IMR-90 (cell line): ENCODE measurements at regions of chr10 and their contacts with region 1.

Region 1: DNA sequence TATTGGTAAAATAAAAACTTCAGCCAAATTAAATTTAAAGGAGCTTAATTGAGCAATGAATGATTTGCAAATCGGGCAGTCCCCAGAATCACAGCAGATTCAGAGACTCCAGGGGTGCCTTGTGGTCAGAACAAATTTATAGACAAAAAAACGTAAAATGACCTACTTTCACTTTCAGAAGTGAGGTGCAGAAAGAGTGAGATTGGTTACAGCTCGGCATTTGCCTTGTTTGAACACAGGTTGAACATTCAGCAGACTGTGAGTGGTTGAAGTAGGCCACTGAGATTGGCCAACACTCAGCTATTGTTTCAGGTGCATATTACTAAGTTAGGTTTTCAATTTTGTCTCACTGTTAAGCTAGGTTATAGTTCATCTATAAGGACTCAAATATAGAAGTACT is 153.4 kb downstream of the BICC1 start:
- DNase-seq: no peak
- ATAC-seq: no peak
- H3K4me3 ChIP-seq: no peak overlapping the region
- H3K27ac ChIP-seq: no peak overlapping the region
- H3K4me1 ChIP-seq: peaks cover 4% of the 10 kb centered on the region; the same call in 1 of the 2 replicates
- H3K27me3 ChIP-seq: no peaks in the 10 kb centered on the region
- CTCF ChIP-seq: no peak
- POLR2A ChIP-seq: no peak
- RAD21 ChIP-seq: no peak

Region 2: GRCh38 chr10:58513188-58514110 is 152.6 kb before region 1 on chr10:
- CTCF ChIA-PET with region 1: no interaction called
- POLR2A ChIA-PET with region 1: no interaction called
- dilution Hi-C with region 1: no loop called
- in situ Hi-C with region 1: no loop called
- intact Hi-C with region 1: no loop called
- DNase-seq: peak; percentile 84
- ATAC-seq: peak; percentile 35
- H3K4me3 ChIP-seq: peak overlapping the region; percentile 72
- H3K27ac ChIP-seq: peak overlapping the region; percentile 77
- H3K4me1 ChIP-seq: peaks cover 8% of the 10 kb centered on the region
- H3K27me3 ChIP-seq: no peaks in the 10 kb centered on the region
- CTCF ChIP-seq: no peak
- POLR2A ChIP-seq: peak; percentile 23; the same call in 1 of the 2 replicates
- RAD21 ChIP-seq: peak; percentile 8; the same call in 1 of the 2 replicates

Region 3: GRCh38 chr10:58701405-58702135 is 35.5 kb after region 1 on chr10:
- CTCF ChIA-PET with region 1: no interaction called
- POLR2A ChIA-PET with region 1: no interaction called
- dilution Hi-C with region 1: no loop called
- in situ Hi-C with region 1: no loop called
- intact Hi-C with region 1: loop called (anchors 5 kb)
- DNase-seq: peak; percentile 81
- ATAC-seq: peak; percentile 18; the same call in 1 of the 2 replicates
- H3K4me3 ChIP-seq: no peak overlapping the region
- H3K27ac ChIP-seq: peak overlapping the region; percentile 73
- H3K4me1 ChIP-seq: peaks cover 16% of the 10 kb centered on the region
- H3K27me3 ChIP-seq: no peaks in the 10 kb centered on the region
- CTCF ChIP-seq: no peak
- POLR2A ChIP-seq: no peak
- RAD21 ChIP-seq: no peak

Region 4: DNA sequence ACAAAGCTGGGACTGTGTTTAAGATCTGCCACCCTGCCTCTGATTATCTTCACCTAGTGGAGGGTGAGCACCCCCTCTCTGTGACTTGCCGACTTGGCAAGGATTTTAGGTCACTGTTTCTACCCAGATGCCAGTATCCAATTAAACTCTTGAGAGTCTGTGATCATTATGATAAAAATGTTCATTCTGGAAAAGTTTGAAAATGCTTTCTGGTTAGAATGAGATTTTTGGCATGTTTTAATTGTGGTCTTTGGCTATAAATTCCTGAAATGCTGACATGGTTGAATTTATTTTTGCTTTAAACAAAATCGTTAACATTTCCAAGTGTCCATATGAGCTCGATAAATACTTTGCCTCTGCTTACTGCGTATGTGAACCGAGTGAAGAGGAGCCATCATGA is 68.1 kb after region 1 on chr10:
- CTCF ChIA-PET with region 1: no interaction called
- POLR2A ChIA-PET with region 1: no interaction called
- dilution Hi-C with region 1: no loop called
- in situ Hi-C with region 1: no loop called
- intact Hi-C with region 1: no loop called
- DNase-seq: peak; percentile 28
- ATAC-seq: peak; percentile 68
- H3K4me3 ChIP-seq: no peak overlapping the region
- H3K27ac ChIP-seq: no peak overlapping the region
- H3K4me1 ChIP-seq: peaks cover 6% of the 10 kb centered on the region
- H3K27me3 ChIP-seq: no peaks in the 10 kb centered on the region
- CTCF ChIP-seq: no peak
- POLR2A ChIP-seq: no peak
- RAD21 ChIP-seq: no peak

Region 5: GRCh38 chr10:58909881-58910280 is 243.9 kb after region 1 on chr10:
- CTCF ChIA-PET with region 1: no interaction called
- POLR2A ChIA-PET with region 1: no interaction called
- dilution Hi-C with region 1: no loop called
- in situ Hi-C with region 1: no loop called
- intact Hi-C with region 1: no loop called
- DNase-seq: peak; percentile 4
- ATAC-seq: no peak
- H3K4me3 ChIP-seq: no peak overlapping the region
- H3K27ac ChIP-seq: no peak overlapping the region
- H3K4me1 ChIP-seq: no peaks in the 10 kb centered on the region
- H3K27me3 ChIP-seq: peaks cover 2% of the 10 kb centered on the region; the same call in 1 of the 2 replicates
- CTCF ChIP-seq: no peak
- POLR2A ChIP-seq: no peak
- RAD21 ChIP-seq: no peak